T-cell (primary cell): ENCODE measurements at regions of chr9 and their contacts with region 1.

Region 1: GRCh38 chr9:97468658-97469448 is 32.6 kb upstream of the TMOD1 start:
- DNase-seq: peak in 25 of 35 experiments; percentile 1 to 52 (median 14)
- ATAC-seq: peak in 2 of 4 experiments; percentile 34 to 43
- H3K4me3 ChIP-seq: no peak overlapping the region
- H3K4me3 Mint-ChIP-seq: no peak overlapping the region
- H3K27ac ChIP-seq: no peak overlapping the region
- H3K27ac Mint-ChIP-seq: no peak overlapping the region
- H3K4me1 ChIP-seq: no peaks in the 10 kb centered on the region
- H3K4me1 Mint-ChIP-seq: no peaks in the 10 kb centered on the region
- H3K27me3 ChIP-seq: no peaks in the 10 kb centered on the region
- H3K27me3 Mint-ChIP-seq: no peaks in the 10 kb centered on the region

Region 2: DNA sequence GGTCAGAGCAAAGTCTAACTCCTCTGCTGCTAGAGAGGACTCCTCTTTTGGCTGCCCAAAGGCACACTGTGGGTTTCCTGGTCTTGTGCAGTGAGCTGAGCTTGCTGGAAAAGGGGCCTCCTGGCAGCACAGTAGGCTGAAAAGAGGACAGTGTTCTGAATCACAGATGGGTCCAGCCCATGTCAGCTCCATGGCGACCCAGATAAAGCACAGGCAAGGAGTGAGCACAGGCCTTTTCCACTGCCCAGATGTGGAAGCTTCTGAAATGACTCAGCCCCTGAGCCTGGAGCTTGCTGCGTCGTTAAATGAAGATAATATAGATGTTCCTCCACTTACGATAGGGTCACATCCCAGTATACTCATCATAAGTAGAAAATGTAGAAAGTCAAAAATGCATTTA is 153.3 kb before region 1 on chr9:
- CTCF ChIA-PET with region 1: no interaction called
- POLR2A ChIA-PET with region 1: no interaction called
- DNase-seq: no peak
- ATAC-seq: no peak
- H3K4me3 ChIP-seq: no peak overlapping the region
- H3K4me3 Mint-ChIP-seq: no peak overlapping the region
- H3K27ac ChIP-seq: no peak overlapping the region
- H3K27ac Mint-ChIP-seq: no peak overlapping the region
- H3K4me1 ChIP-seq: no peaks in the 10 kb centered on the region
- H3K4me1 Mint-ChIP-seq: peaks cover 0 to 8% (median 5%) of the 10 kb centered on the region in 3 donors
- H3K27me3 ChIP-seq: no peaks in the 10 kb centered on the region
- H3K27me3 Mint-ChIP-seq: no peaks in the 10 kb centered on the region

Region 3: DNA sequence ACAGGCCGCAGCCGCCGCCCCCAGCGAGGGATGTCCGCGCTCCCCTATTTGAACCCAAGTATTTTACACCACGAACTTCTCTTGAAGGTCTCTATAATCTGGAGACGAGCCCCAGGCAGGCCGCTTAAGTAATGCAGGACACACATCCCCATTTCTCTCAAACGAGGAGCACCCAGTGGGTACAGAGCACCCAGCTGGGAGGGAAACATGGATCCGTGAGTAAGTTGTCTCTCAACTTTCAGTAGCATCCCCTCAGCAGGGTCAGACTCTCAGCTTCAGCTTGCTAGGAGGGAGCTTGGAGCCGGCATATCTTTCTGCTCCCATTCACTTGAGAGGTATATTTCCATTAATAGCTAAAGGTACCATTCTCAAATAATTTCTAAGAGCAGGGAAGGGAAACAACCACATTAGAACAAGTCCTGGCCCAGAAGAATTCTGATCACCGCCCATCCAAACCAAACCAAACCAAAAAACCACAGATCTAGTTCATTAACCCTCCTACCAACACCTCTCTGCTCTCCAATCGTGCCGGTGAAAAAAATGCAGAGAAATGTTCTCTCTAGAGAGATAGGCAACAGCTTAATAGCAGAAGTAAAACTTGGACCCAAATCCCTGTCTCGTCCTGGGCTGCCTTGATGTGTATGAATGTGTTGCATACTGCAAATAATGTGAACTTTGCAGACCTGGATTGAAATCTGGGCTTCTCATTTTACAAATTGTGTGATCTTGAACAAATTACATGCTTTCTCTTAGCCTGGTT is 56.0 kb before region 1 on chr9:
- CTCF ChIA-PET with region 1: no interaction called
- POLR2A ChIA-PET with region 1: no interaction called
- DNase-seq: peak in 5 of 35 experiments; percentile 8 to 55 (median 29)
- ATAC-seq: no peak
- H3K4me3 ChIP-seq: peak overlapping the region; percentile 73 to 74
- H3K4me3 Mint-ChIP-seq: peak overlapping the region; percentile 84 to 89 (median 87)
- H3K27ac ChIP-seq: peak overlapping the region; percentile 56
- H3K27ac Mint-ChIP-seq: peak overlapping the region; percentile 62 to 81
- H3K4me1 ChIP-seq: peaks cover 3 to 14% of the 10 kb centered on the region in 2 experiments
- H3K4me1 Mint-ChIP-seq: peaks cover 30 to 46% (median 38%) of the 10 kb centered on the region in 3 donors
- H3K27me3 ChIP-seq: no peaks in the 10 kb centered on the region
- H3K27me3 Mint-ChIP-seq: peaks cover 11 to 13% of the 10 kb centered on the region in 2 donors

Region 4: GRCh38 chr9:97487861-97488260 is 19.0 kb after region 1 on chr9:
- CTCF ChIA-PET with region 1: no interaction called
- POLR2A ChIA-PET with region 1: no interaction called
- DNase-seq: no peak
- ATAC-seq: no peak
- H3K4me3 ChIP-seq: no peak overlapping the region
- H3K4me3 Mint-ChIP-seq: no peak overlapping the region
- H3K27ac ChIP-seq: no peak overlapping the region
- H3K27ac Mint-ChIP-seq: no peak overlapping the region
- H3K4me1 ChIP-seq: no peaks in the 10 kb centered on the region
- H3K4me1 Mint-ChIP-seq: no peaks in the 10 kb centered on the region
- H3K27me3 ChIP-seq: no peaks in the 10 kb centered on the region
- H3K27me3 Mint-ChIP-seq: no peaks in the 10 kb centered on the region

Region 5: GRCh38 chr9:97598461-97599288 is 129.8 kb after region 1 on chr9:
- CTCF ChIA-PET with region 1: interaction called, 18 to 23 read pairs
- POLR2A ChIA-PET with region 1: no interaction called
- DNase-seq: peak; percentile 32 to 84 (median 63)
- ATAC-seq: peak; percentile 86 to 97 (median 92)
- H3K4me3 ChIP-seq: peak overlapping the region in 1 of 2 donors; percentile 10
- H3K4me3 Mint-ChIP-seq: peak overlapping the region in 2 of 3 donors; percentile 41 to 44
- H3K27ac ChIP-seq: no peak overlapping the region
- H3K27ac Mint-ChIP-seq: peak overlapping the region in 1 of 2 donors; percentile 15
- H3K4me1 ChIP-seq: peaks cover 0 to 7% of the 10 kb centered on the region in 2 experiments
- H3K4me1 Mint-ChIP-seq: peaks cover 7 to 8% (median 7%) of the 10 kb centered on the region in 3 donors
- H3K27me3 ChIP-seq: peaks cover 0 to 2% of the 10 kb centered on the region in 2 experiments
- H3K27me3 Mint-ChIP-seq: peaks cover 0 to 2% of the 10 kb centered on the region in 2 donors

Region 6: DNA sequence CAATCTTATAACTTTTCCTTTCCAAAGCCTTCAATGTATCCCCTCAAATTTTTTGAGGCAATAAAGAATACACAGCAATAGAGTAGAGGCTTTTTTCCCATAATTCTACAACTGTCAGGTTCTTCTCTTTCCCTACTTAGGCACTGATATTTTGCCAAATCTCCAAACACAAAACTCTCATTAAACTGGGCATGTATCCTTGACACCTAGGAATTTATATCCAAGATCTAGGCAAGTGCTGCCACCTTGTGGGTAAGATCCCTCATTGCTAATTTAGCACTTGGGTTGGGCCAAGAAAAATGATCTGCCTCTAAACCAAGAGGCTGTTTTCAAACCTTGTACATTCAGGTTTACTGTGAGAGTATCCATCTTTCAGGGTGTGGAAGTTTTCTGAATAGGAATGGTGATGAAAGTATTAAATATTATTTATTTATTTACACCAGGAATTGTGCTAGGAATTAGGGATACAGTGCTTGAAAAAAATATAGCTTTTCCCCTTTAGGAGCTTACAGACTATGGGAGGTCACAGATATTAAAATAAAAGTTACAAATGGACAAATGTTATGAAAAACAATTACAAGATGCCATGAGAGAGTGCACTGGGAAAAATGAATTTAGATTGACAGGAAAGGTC is 146.7 kb after region 1 on chr9:
- CTCF ChIA-PET with region 1: interaction called, 3 to 12 read pairs
- POLR2A ChIA-PET with region 1: no interaction called
- DNase-seq: peak in 32 of 35 experiments; percentile 7 to 78 (median 38)
- ATAC-seq: peak in 2 of 4 experiments; percentile 52 to 55
- H3K4me3 ChIP-seq: no peak overlapping the region
- H3K4me3 Mint-ChIP-seq: no peak overlapping the region
- H3K27ac ChIP-seq: no peak overlapping the region
- H3K27ac Mint-ChIP-seq: no peak overlapping the region
- H3K4me1 ChIP-seq: no peaks in the 10 kb centered on the region
- H3K4me1 Mint-ChIP-seq: peaks cover 0 to 5% (median 0%) of the 10 kb centered on the region in 3 donors
- H3K27me3 ChIP-seq: no peaks in the 10 kb centered on the region
- H3K27me3 Mint-ChIP-seq: no peaks in the 10 kb centered on the region